Naive thymus-derived CD8-positive, alpha-beta T cell (primary cell): ENCODE measurements at regions of chr22 and their contacts with region 1.

Region 1: GRCh38 chr22:37282385-37282677 is at the start of gene CYTH4:
- DNase-seq: peak; percentile 63 to 85 (median 66)
- ATAC-seq: peak; percentile 84 to 87
- H3K4me3 Mint-ChIP-seq: peak within 1 kb of the TSS; percentile 90 to 99 (median 94)
- H3K27ac Mint-ChIP-seq: peak within 1 kb of the TSS; percentile 93 to 100 (median 98)
- H3K4me1 Mint-ChIP-seq: peaks cover 40 to 84% (median 62%) of the 10 kb centered on the region in 4 donors
- H3K27me3 Mint-ChIP-seq: no peaks in the 10 kb centered on the region
- polyA plus RNA-seq, gene CYTH4: 48.9 to 60.8 (median 54.6) TPM

Region 2: GRCh38 chr22:37148031-37148651 is 134.2 kb before region 1 on chr22:
- POLR2A ChIA-PET with region 1: no interaction called
- DNase-seq: peak in 8 of 10 donors; percentile 16 to 63 (median 39)
- ATAC-seq: peak; percentile 14 to 27
- H3K4me3 Mint-ChIP-seq: peak overlapping the region; percentile 89 to 94 (median 90)
- H3K27ac Mint-ChIP-seq: peak overlapping the region; percentile 96 to 99 (median 98)
- H3K4me1 Mint-ChIP-seq: peaks cover 45 to 84% (median 72%) of the 10 kb centered on the region in 4 donors
- H3K27me3 Mint-ChIP-seq: no peaks in the 10 kb centered on the region

Region 3: DNA sequence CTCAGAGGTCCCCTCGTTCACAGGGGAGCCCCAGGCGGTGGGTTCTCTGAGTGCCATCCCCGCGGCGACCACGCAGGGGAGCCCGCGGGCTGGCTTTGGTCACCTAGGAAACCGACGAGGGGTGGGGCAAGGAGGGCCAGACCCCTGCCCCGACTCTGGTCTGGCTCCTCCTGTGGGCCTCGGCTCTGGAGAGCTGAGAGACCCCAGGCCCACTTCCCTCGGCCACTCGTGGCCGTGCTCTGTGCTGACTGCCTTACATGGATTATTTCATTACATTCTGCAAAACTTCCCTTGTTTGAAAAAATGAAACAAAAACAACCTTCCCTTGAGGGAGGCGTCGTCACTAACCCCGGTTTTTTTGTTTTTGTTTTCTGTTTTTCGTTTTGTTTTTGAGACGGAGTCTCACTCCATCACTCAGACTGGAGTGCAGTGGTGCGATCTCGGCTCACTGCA is 15.2 kb before region 1 on chr22:
- POLR2A ChIA-PET with region 1: interaction called, 10 read pairs
- DNase-seq: peak; percentile 54 to 79 (median 73)
- ATAC-seq: peak; percentile 82 to 90
- H3K4me3 Mint-ChIP-seq: peak overlapping the region; percentile 82 to 93 (median 86)
- H3K27ac Mint-ChIP-seq: peak overlapping the region; percentile 85 to 98 (median 95)
- H3K4me1 Mint-ChIP-seq: peaks cover 27 to 35% (median 31%) of the 10 kb centered on the region in 4 donors
- H3K27me3 Mint-ChIP-seq: no peaks in the 10 kb centered on the region

Region 4: DNA sequence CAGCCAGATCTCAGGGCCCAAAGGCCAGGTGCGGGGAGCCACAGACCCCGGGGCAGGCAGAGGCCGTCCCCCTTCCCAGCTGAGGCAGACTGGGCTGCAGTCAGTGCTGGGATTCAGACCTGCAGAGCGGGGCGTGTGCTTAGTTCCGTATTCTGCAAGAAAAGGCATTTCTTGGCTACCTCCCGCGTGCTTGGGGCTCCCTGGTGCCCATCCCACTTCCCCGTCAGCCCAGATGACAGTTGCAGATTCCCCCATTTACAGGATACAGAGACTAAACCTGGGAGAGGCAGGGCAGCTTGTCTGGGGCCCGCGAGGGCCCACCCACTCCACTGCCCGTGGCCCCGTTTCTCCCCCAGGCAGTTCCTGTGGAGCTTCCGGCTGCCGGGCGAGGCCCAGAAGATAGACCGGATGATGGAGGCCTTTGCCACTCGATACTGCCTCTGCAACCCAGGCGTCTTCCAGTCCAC is 18.3 kb after region 1 on chr22:
- POLR2A ChIA-PET with region 1: interaction called, 118 read pairs
- DNase-seq: peak in 9 of 10 donors; percentile 35 to 76 (median 43)
- ATAC-seq: peak; percentile 84 to 85
- H3K4me3 Mint-ChIP-seq: peak overlapping the region; percentile 25 to 86 (median 76)
- H3K27ac Mint-ChIP-seq: peak overlapping the region; percentile 92 to 99 (median 95)
- H3K4me1 Mint-ChIP-seq: peaks cover 33 to 93% (median 82%) of the 10 kb centered on the region in 4 donors
- H3K27me3 Mint-ChIP-seq: no peaks in the 10 kb centered on the region

Region 5: GRCh38 chr22:37316875-37317371 is 34.6 kb after region 1 on chr22:
- POLR2A ChIA-PET with region 1: interaction called, 141 read pairs
- DNase-seq: peak; percentile 52 to 83 (median 66)
- ATAC-seq: peak; percentile 66 to 74
- H3K4me3 Mint-ChIP-seq: peak overlapping the region in 1 of 10 donors; percentile 34
- H3K27ac Mint-ChIP-seq: peak overlapping the region in 4 of 10 donors; percentile 34 to 73 (median 52)
- H3K4me1 Mint-ChIP-seq: peaks cover 20 to 60% (median 51%) of the 10 kb centered on the region in 4 donors
- H3K27me3 Mint-ChIP-seq: peaks cover 0 to 2% (median 0%) of the 10 kb centered on the region in 5 donors